ENCODE measurements at regions of chrX and their contacts with region 1.

Region 1: GRCh38 chrX:111609206-111609605 is 71.8 kb upstream of the ALG13 start:
- DNase-seq: no peak
- H3K4me3 ChIP-seq: no peak overlapping the region
- H3K27ac ChIP-seq: no peak overlapping the region
- H3K4me1 ChIP-seq: no peaks in the 10 kb centered on the region
- H3K27me3 ChIP-seq: no peaks in the 10 kb centered on the region
- CTCF ChIP-seq: no peak
- EP300 ChIP-seq: no peak
- POLR2A ChIP-seq: no peak

Region 2: GRCh38 chrX:111265486-111265885 is 343.7 kb before region 1 on chrX:
- intact Hi-C with region 1: loop called in 1 of 4 experiments (anchors 5 kb)
- DNase-seq: no peak
- H3K4me3 ChIP-seq: no peak overlapping the region
- H3K27ac ChIP-seq: no peak overlapping the region
- H3K4me1 ChIP-seq: no peaks in the 10 kb centered on the region
- H3K27me3 ChIP-seq: no peaks in the 10 kb centered on the region
- CTCF ChIP-seq: no peak
- EP300 ChIP-seq: no peak
- POLR2A ChIP-seq: no peak

Measured in ovary (tissue), 10 donors.